Panc1 (cell line): ENCODE measurements at regions of chr6 and their contacts with region 1.

Region 1: DNA sequence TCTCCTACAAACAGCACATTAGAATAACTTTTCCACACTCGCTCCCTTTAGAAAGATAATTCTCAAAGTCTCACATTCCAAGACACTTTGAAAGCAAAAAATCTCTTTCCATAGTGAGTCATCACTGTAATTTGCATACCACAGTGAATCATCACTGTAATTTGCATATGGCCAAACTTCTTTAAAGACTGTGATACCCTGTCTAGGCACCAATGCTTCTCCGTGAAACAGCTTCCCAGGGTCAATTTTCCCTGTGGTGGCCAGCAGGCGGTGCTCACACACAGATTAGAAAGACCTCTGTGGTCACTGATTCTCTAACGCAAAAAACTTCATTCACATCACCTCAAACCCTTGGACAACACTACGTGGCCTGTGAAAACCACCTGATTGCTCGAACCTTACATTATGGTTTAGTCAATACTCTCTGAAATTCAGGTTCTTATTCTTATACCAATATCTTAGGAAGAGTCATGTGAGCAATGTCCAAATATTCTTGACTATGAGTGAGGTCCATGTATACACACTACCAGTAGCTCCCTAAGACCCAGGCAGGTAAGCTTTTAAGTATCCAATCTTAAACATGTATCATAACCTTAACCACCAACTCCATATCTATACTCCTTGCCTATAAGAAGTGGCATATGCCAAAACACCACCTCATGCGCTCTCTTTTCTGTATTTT is 78.5 kb upstream of the PHACTR1 start:
- DNase-seq: peak; percentile 24
- ATAC-seq: peak; percentile 91
- H3K4me3 ChIP-seq: no peak overlapping the region
- H3K27ac ChIP-seq: no peak overlapping the region
- H3K4me1 ChIP-seq: no peaks in the 10 kb centered on the region
- H3K27me3 ChIP-seq: 0 out of 2 replicates have a peak, but pooled peaks cover 2% of the 10 kb centered on the region
- CTCF ChIP-seq: peak; percentile 93

Region 2: DNA sequence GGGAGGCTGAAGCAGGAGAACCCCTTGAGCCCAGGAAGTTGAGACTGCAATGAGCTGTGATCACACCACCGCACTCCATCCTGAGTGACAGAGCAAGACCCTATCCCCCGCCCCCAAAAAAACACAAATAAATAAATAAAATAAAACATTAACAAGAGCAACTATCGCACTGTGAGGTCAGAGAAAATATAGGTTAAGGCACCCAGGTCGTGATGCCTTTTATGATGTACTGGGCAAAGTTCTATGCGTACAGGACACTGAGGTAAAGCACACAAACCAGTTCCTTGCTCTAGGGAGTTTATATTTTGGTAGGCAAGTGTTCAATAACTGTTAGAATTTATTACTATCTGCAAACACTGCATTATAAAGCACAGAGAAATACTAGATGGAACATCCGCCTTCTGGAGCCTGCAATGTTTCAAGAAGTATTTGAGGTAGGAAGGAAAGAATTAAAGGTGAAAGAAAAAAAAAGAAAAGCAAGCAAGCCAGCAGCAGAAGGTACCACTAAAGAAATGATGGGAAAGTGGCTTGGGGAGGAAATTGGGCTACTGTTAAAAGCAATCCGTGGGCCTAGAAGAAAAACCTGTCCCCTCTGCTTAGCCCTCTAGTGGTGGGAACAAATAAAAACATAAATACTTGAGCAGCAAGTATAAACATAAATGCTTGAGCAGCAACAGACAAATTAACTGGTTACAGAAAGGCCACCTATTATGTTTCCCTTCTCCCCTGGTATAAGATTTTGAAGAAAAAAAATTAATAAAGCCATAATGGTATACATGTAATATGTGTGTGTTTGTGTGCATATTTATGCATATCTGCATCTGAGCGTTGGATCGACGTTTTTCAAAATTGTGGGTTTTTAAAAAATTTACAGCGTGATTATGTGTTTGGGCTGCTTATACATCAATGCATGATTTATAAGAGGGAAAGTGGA is 206.5 kb after region 1 on chr6:
- CTCF ChIA-PET with region 1: no interaction called
- POLR2A ChIA-PET with region 1: no interaction called
- in situ Hi-C with region 1: no loop called
- intact Hi-C with region 1: loop called (anchors 2 kb)
- DNase-seq: no peak
- ATAC-seq: peak; percentile 66; the same call in 1 of the 2 replicates
- H3K4me3 ChIP-seq: no peak overlapping the region
- H3K27ac ChIP-seq: no peak overlapping the region
- H3K4me1 ChIP-seq: no peaks in the 10 kb centered on the region
- H3K27me3 ChIP-seq: peaks cover 5% of the 10 kb centered on the region; the same call in 1 of the 2 replicates
- CTCF ChIP-seq: peak; percentile 81

Region 3: DNA sequence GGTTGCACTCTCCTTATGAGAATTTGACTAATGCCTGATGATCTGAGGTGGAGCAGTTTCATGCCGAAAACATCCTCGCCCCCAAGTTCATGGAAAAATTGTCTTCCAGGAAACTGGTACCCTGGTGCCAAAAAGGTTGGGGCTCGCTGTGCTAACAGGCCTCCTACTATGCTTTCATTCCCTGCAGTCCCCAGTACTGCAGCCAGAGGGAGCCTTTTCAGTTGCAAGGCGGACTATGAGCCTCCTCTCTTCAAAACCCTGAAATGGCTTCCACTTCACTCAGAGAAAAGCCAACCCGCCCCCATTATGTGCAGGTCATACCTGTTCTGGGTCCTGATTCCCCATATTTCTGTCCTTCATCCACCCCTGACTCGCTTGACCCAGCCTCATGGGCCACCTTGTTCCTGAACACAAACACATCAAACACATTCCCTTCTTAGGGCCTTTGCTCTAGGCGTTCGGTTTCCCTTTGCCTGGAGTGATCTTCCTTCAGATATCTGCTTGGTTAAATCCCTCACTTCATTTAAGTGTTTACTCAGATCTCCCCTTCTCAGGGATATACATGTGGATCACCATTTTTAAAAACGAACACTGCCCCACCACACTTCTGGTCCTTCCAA is 252.2 kb after region 1 on chr6:
- CTCF ChIA-PET with region 1: interaction called, 3 read pairs
- POLR2A ChIA-PET with region 1: no interaction called
- in situ Hi-C with region 1: no loop called
- intact Hi-C with region 1: loop called (anchors 1 kb)
- DNase-seq: no peak
- ATAC-seq: no peak
- H3K4me3 ChIP-seq: no peak overlapping the region
- H3K27ac ChIP-seq: no peak overlapping the region
- H3K4me1 ChIP-seq: no peaks in the 10 kb centered on the region
- H3K27me3 ChIP-seq: no peaks in the 10 kb centered on the region
- CTCF ChIP-seq: peak; percentile 72